Natural killer cell (primary cell): ENCODE measurements at regions of chr5 and their contacts with region 1.

Region 1: GRCh38 chr5:172106511-172107356 is 81.3 kb downstream of the STK10 start:
- DNase-seq: peak; percentile 67 to 82
- ATAC-seq: peak; percentile 40 to 53 (median 43)
- H3K4me3 ChIP-seq: no peak overlapping the region
- H3K4me3 Mint-ChIP-seq: peak overlapping the region; percentile 56
- H3K27ac ChIP-seq: peak overlapping the region; percentile 34
- H3K27ac Mint-ChIP-seq: peak overlapping the region; percentile 78 to 81
- H3K4me1 ChIP-seq: peaks cover 54% of the 10 kb centered on the region
- H3K4me1 Mint-ChIP-seq: peaks cover 42 to 61% of the 10 kb centered on the region in 2 donors
- H3K27me3 ChIP-seq: no peaks in the 10 kb centered on the region
- H3K27me3 Mint-ChIP-seq: no peaks in the 10 kb centered on the region
- CTCF ChIP-seq: peak; percentile 89

Region 2: GRCh38 chr5:170293273-170293672 is 1813.5 kb before region 1 on chr5:
- intact Hi-C with region 1: loop called (anchors 10 kb)
- DNase-seq: peak; percentile 78 to 79
- ATAC-seq: peak; percentile 61 to 87 (median 86)
- H3K4me3 ChIP-seq: peak overlapping the region; percentile 90
- H3K4me3 Mint-ChIP-seq: peak overlapping the region; percentile 100
- H3K27ac ChIP-seq: peak overlapping the region; percentile 32
- H3K27ac Mint-ChIP-seq: peak overlapping the region; percentile 94 to 99
- H3K4me1 ChIP-seq: peaks cover 70% of the 10 kb centered on the region
- H3K4me1 Mint-ChIP-seq: peaks cover 99 to 100% of the 10 kb centered on the region in 2 donors
- H3K27me3 ChIP-seq: no peaks in the 10 kb centered on the region
- H3K27me3 Mint-ChIP-seq: no peaks in the 10 kb centered on the region
- CTCF ChIP-seq: no peak

Region 3: GRCh38 chr5:172133359-172134029 is 26.8 kb after region 1 on chr5:
- intact Hi-C with region 1: loop called (anchors 2 kb)
- DNase-seq: peak; percentile 53 to 61
- ATAC-seq: peak; percentile 79 to 91 (median 86)
- H3K4me3 ChIP-seq: no peak overlapping the region
- H3K4me3 Mint-ChIP-seq: peak overlapping the region; percentile 79
- H3K27ac ChIP-seq: peak overlapping the region; percentile 58
- H3K27ac Mint-ChIP-seq: peak overlapping the region; percentile 87 to 90
- H3K4me1 ChIP-seq: peaks cover 64% of the 10 kb centered on the region
- H3K4me1 Mint-ChIP-seq: peaks cover 80 to 81% of the 10 kb centered on the region in 2 donors
- H3K27me3 ChIP-seq: no peaks in the 10 kb centered on the region
- H3K27me3 Mint-ChIP-seq: no peaks in the 10 kb centered on the region
- CTCF ChIP-seq: no peak

Region 4: DNA sequence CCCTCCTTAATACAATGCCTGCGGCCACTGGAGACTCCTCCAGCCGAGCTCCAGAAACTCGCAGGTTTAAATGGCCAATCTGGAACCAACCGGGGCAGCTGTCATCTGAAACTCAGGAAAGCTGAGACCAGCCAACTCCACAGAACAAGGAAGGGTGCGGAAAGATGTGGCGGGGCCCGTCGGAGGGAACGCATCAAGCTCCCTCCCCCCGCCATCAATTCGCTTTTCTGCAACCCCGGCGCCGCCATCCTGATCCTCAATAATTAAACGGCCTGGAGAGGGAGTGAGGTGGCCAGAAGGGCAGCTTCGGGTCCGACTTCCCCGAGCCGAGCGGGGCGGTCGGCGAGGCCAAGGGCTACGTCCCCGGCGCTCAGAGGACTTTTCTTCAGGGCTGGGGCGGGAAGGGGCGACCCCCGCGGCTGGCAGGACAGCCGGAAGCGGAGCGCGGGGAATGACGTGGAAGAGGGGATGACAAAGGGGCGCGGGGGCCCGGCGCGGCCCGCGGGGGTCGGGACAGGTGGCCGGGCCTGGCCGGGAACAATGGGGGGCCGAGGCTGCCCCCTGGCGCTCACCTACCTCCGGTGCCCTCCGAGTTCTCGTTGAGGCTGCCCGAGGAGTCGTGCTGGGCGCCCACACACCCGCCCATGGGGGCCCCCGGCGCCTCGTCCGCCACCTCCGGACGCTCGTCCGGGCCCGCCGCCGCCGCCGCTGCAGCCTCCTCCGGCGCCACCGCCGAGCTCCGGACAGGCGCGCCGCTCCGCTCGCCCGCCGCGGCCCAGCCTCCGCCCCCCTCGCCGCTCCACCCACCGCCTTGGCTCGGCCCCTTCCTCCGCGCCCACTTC is 176.5 kb after region 1 on chr5 and contains the start of gene UBTD2:
- intact Hi-C with region 1: loop called (anchors 5 kb)
- DNase-seq: peak; percentile 72 to 82
- ATAC-seq: peak; percentile 86 to 93 (median 88)
- H3K4me3 ChIP-seq: peak within 1 kb of the TSS; percentile 66
- H3K4me3 Mint-ChIP-seq: peak within 1 kb of the TSS; percentile 93
- H3K27ac ChIP-seq: no peak within 1 kb of the TSS
- H3K27ac Mint-ChIP-seq: peak within 1 kb of the TSS; percentile 64 to 76
- H3K4me1 ChIP-seq: peaks cover 11% of the 10 kb centered on the region
- H3K4me1 Mint-ChIP-seq: peaks cover 17 to 18% of the 10 kb centered on the region in 2 donors
- H3K27me3 ChIP-seq: no peaks in the 10 kb centered on the region
- H3K27me3 Mint-ChIP-seq: no peaks in the 10 kb centered on the region
- CTCF ChIP-seq: peak; percentile 49
- total RNA-seq, gene UBTD2: 1.7 to 3.3 (median 2.6) TPM

Region 5: DNA sequence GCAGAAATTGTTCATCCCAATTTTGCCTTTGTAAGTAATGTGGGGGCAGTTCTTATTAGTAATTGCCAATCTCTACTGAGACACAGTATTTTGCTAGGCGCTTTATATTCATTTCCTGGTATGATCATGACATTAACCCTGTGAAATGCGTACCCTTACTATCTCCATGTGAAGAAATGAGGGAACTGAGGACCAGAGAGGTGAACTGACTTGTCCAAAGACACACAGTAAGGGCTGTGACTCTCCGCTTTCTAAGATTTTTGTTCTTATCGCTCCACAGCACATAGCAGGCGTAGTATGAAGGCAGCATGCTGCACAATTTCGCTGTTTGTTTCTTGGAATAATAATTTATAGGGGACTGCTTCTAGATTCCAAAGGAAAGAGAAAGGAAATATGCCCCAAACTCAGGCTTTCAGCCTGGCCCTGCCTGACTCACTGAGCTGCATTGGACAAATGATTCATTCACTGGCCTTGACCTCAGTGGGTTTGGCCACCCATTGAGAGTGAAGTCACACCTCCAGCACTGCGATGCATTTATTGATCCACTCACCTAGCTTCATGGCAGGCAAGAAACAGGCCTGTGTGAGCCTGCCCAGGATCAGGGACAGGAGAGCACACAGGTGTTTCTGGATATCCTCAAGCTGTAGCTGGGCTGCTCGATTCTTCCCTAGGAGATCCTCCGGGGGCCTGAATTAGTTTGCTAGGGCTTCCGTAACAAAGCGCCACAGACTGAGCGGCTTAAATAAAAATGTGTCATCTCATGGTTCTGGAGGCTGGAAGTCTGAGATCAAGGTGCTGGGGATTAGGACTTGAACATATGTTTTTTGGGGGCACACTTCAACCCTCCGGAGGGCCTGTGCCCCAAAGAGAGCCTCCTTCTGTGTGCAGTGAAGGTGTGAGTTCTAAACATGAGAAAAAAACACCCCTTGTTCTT is 671.4 kb after region 1 on chr5:
- intact Hi-C with region 1: loop called (anchors 5 kb)
- DNase-seq: peak; percentile 31 to 41
- ATAC-seq: peak; percentile 46 to 61 (median 51)
- H3K4me3 ChIP-seq: peak overlapping the region; percentile 8
- H3K4me3 Mint-ChIP-seq: peak overlapping the region; percentile 45
- H3K27ac ChIP-seq: peak overlapping the region; percentile 97
- H3K27ac Mint-ChIP-seq: peak overlapping the region; percentile 97 to 98
- H3K4me1 ChIP-seq: peaks cover 46% of the 10 kb centered on the region
- H3K4me1 Mint-ChIP-seq: peaks cover 31 to 46% of the 10 kb centered on the region in 2 donors
- H3K27me3 ChIP-seq: no peaks in the 10 kb centered on the region
- H3K27me3 Mint-ChIP-seq: no peaks in the 10 kb centered on the region
- CTCF ChIP-seq: no peak